ENCODE measurements at regions of chr11 and their contacts with region 1.

Region 1: GRCh38 chr11:44083906-44084305 is 11.6 kb upstream of the EXT2 start:
- DNase-seq: no peak
- CTCF ChIP-seq: no peak

Region 2: DNA sequence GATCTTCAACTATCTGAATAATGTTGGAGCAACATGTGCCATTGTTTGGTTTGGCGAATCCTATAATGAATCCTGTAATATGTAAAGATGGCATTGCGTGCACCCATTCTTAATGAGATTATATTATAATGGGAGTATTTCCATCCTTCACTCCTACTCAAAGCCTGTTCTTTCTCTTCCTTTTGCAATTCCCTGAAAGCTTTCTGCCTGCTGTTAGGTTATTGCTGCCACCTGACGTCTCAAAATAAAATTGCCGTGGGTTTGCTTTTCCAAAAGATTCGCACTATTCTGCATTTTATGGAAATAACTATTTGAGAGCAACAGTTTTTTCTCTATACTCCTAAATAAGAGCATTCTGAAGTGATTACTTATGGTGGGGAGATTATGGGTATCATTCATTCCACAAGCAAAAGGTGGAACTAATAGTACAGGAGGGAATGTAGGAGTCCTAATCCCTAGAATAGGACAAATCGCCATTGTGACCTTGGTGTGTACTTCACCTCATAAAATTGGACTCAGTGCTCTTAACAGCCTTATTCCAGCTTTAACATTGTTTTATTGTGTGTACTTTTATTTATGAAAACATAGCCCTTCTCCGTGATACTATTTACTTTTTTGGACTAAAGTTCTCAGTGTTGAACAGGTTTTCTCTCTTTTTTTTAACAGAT is 272.8 kb before region 1 on chr11:
- in situ Hi-C with region 1: no loop called
- DNase-seq: no peak
- CTCF ChIP-seq: no peak

Region 3: DNA sequence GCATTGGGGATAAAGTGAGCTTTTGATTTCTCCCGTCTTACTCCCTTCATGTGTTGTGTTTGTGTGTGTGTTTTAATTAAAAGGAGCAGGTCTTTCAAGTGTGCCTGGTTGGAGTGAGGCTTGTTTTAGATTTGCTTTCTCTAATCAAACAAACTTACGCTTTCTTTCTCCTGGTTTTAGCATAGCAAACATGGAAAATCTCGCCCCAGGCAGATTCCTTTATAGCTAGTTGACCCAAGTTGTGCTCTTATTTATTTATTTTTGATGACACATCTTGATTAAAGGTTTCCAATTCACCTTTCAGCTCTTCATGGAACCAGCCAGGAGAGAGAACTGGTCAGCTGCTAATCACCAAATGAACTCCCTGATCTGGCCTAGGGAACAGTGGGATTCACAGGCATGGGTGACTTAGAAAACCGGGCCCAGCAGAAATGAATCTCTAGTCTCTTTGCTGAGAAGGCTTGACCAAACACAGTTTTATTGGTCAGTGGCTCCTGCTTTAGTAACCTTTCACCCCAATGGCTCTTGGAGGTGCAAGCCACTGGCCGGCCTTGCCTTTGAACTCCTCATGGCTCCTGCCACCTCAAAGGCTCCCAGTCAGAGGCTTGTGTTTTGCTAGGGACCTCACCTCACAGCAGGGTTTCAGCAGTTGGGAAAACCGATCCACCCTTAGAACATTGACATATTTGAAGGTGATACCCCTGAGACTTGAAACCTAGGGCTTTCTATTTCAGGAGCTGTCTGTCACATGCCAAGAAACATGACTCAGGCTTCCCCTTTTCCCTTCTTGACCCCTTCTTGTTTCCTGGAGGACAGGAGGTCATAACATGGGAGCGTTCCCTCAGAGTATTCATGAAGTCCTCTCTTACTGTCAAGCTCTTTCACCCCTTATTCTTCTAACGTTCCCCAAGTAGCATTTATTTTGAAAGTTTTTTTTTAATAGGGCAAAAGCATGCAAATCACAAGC is 60.3 kb after region 1 on chr11:
- in situ Hi-C with region 1: loop called (anchors 10 kb)
- DNase-seq: no peak
- CTCF ChIP-seq: no peak

Measured in GM13976 (cell line).